PC-9 (cell line): ENCODE measurements at regions of chr19 and their contacts with region 1.

Region 1: GRCh38 chr19:12736995-12737834 is at the start of gene GET3:
- DNase-seq: peak; percentile 94 to 100
- H3K4me3 ChIP-seq: peak within 1 kb of the TSS; percentile 64
- H3K27ac ChIP-seq: peak within 1 kb of the TSS; percentile 75
- H3K4me1 ChIP-seq: peaks cover 30% of the 10 kb centered on the region
- H3K27me3 ChIP-seq: no peaks in the 10 kb centered on the region
- CTCF ChIP-seq: no peak
- total RNA-seq, gene GET3: 72.8 and 81.9 TPM in 2 replicates

Region 2: GRCh38 chr19:11558881-11559828 is 1178.1 kb before region 1 on chr19 and contains the start of gene ELOF1:
- CTCF ChIA-PET with region 1: interaction called, 13 read pairs
- POLR2A ChIA-PET with region 1: no interaction called
- intact Hi-C with region 1: no loop called
- DNase-seq: peak; percentile 97
- H3K4me3 ChIP-seq: peak within 1 kb of the TSS; percentile 97
- H3K27ac ChIP-seq: peak within 1 kb of the TSS; percentile 47; the same call in 1 of the 2 replicates
- H3K4me1 ChIP-seq: peaks cover 11% of the 10 kb centered on the region; the same call in 1 of the 2 replicates
- H3K27me3 ChIP-seq: no peaks in the 10 kb centered on the region
- CTCF ChIP-seq: peak; percentile 48
- total RNA-seq, gene ELOF1: 65.5 and 68.7 TPM in 2 replicates

Region 3: GRCh38 chr19:12647490-12648071 is 89.6 kb before region 1 on chr19:
- CTCF ChIA-PET with region 1: no interaction called
- POLR2A ChIA-PET with region 1: no interaction called
- intact Hi-C with region 1: no loop called
- DNase-seq: peak in 1 of 2 experiments; percentile 13
- H3K4me3 ChIP-seq: no peak overlapping the region
- H3K27ac ChIP-seq: no peak overlapping the region
- H3K4me1 ChIP-seq: no peaks in the 10 kb centered on the region
- H3K27me3 ChIP-seq: no peaks in the 10 kb centered on the region
- CTCF ChIP-seq: no peak

Region 4: DNA sequence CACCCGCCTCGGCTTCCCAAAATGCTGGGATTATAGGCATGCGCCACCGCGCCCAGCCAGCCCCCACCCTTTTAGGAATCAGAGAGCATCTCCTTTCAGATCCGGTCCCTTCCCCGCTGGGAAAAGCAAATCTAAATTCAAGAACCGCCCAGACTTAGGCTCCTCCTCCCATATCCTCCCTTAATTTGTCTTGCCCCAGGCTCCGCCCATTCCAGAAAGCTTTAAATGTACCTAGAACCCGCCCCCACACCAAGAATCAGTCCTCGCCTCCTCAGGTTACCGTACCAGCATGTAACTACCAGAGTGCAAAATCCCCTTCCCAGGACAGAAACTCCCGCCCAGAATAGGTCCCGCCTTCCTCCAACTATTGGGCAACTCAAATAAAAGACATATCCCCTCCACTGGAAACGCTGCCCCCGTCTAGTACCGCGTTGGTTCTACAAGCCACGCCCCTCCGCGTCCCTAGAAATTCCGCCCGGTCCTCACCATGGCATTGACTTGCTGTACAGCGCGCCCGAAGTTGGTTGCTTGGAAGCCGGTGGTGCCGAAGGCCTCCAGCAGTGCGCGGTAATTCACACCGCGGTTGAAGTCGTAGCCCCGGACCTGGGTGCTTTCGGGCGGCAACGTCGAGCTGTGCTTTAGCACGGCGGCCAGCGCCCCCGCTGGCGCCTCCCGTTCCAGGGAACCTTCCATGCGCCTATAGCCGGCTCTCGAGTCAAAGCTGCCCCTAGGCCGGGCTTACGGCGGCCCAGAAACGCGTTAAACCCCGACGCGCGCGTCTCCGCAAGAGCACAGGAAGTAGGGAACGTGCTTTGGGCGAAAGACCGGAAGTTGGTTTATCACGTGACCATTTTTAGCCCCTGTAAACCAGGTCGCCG is 55.9 kb before region 1 on chr19 and contains the start of gene DHPS:
- CTCF ChIA-PET with region 1: no interaction called
- POLR2A ChIA-PET with region 1: interaction called, 3 read pairs
- intact Hi-C with region 1: loop called (anchors 1 kb)
- DNase-seq: peak; percentile 93 to 98
- H3K4me3 ChIP-seq: peak within 1 kb of the TSS; percentile 76
- H3K27ac ChIP-seq: peak within 1 kb of the TSS; percentile 98
- H3K4me1 ChIP-seq: peaks cover 11% of the 10 kb centered on the region; the same call in 1 of the 2 replicates
- H3K27me3 ChIP-seq: no peaks in the 10 kb centered on the region
- CTCF ChIP-seq: peak; percentile 30; the same call in 1 of the 2 replicates
- total RNA-seq, gene DHPS: 106 and 121 TPM in 2 replicates

Region 5: GRCh38 chr19:12696366-12697335 is 40.6 kb before region 1 on chr19 and contains the start of gene FBXW9:
- CTCF ChIA-PET with region 1: no interaction called
- POLR2A ChIA-PET with region 1: interaction called, 12 read pairs
- intact Hi-C with region 1: no loop called
- DNase-seq: peak; percentile 90 to 91
- H3K4me3 ChIP-seq: peak within 1 kb of the TSS; percentile 72
- H3K27ac ChIP-seq: peak within 1 kb of the TSS; percentile 48
- H3K4me1 ChIP-seq: peaks cover 8% of the 10 kb centered on the region; the same call in 1 of the 2 replicates
- H3K27me3 ChIP-seq: no peaks in the 10 kb centered on the region
- CTCF ChIP-seq: no peak
- total RNA-seq, gene FBXW9: 21.0 and 21.9 TPM in 2 replicates

Region 6: GRCh38 chr19:12722566-12723380 is 14.4 kb before region 1 on chr19:
- CTCF ChIA-PET with region 1: interaction called, 3 read pairs
- POLR2A ChIA-PET with region 1: interaction called, 3 read pairs
- intact Hi-C with region 1: loop called (anchors 1 kb)
- DNase-seq: peak; percentile 92 to 98
- H3K4me3 ChIP-seq: peak overlapping the region; percentile 76
- H3K27ac ChIP-seq: peak overlapping the region; percentile 55
- H3K4me1 ChIP-seq: peaks cover 14% of the 10 kb centered on the region; the same call in 1 of the 2 replicates
- H3K27me3 ChIP-seq: no peaks in the 10 kb centered on the region
- CTCF ChIP-seq: 0 out of 2 replicates have a peak, but pooled peaks have one; percentile 17

Region 7: DNA sequence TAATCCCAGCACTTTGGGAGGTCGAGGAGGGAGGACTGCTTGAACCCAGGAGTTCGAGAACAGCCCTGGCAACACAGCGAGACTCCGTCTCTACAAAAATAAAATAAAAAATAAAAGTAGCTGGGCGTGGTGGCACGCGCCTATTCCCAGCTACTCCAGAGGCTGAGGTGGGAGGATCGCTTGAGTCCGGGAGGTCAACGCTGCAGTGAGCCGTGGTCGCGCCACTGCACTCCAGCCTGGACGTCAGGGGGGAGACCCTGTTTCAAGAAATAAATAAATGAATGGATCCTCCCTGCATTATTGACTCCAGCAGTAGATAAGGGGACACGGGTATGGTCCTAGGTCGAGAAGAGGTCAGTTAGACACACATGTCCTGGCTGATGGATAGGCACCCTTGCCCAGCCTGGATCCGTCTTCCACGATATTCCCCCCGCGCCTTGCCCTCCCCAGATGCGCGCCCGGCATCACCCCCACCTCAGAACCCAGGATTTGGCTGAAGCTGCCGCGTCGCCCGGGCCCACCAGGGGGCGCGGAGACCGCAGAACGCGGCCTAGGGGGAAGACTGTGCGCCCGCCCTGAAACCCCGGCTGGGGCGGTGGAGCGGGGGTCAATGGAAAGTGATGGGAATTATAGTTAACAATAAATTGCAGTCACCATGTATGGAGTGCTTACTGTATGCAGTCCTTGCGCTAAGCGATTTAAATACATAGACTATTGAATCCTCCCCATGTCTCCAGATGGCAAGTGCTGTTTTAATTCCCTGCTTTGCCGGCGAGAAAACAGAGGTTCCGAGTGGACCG is 40.2 kb after region 1 on chr19:
- CTCF ChIA-PET with region 1: no interaction called
- POLR2A ChIA-PET with region 1: no interaction called
- intact Hi-C with region 1: loop called (anchors 1 kb)
- DNase-seq: peak; percentile 63 to 85
- H3K4me3 ChIP-seq: peak overlapping the region; percentile 59
- H3K27ac ChIP-seq: peak overlapping the region; percentile 51
- H3K4me1 ChIP-seq: peaks cover 54% of the 10 kb centered on the region
- H3K27me3 ChIP-seq: no peaks in the 10 kb centered on the region
- CTCF ChIP-seq: peak; percentile 99

Region 8: DNA sequence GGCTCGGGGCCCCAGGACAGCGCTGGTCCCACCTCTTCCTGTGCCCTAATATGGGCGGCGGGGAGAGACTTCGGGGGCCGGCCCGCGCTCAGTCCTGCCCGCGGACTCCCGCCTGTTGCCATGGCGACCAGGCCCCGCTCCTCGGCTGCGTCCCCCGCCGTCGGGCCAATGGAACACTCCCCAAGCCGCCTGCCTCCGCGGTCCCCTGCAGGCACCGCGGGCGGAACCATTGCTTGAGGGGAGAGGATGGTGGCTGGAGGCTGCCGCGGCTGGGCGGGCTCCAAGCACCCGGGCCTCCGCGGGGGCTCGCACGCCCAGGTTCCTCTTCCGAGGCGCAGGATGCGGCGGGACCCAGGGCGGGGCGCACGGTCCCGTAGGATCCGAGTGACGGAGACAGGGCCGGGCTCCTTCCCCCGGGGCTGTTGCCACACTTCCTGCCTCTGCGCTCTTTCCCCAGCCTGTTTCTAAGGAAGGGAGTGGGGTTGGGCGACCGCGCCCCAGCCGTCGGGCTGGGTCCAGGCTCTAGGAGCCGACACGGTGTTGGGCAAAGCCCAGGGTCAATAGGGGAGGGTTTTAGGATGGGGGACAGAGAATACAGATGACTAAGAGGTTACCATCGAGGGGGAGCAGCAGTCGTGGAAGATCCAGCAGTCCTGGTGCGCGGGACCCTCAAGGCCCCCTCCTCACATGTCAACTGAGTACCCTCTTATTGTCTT is 52.8 kb after region 1 on chr19:
- CTCF ChIA-PET with region 1: no interaction called
- POLR2A ChIA-PET with region 1: interaction called, 11 read pairs
- intact Hi-C with region 1: no loop called
- DNase-seq: peak; percentile 92 to 98
- H3K4me3 ChIP-seq: peak overlapping the region; percentile 73; the same call in 1 of the 2 replicates
- H3K27ac ChIP-seq: peak overlapping the region; percentile 86
- H3K4me1 ChIP-seq: peaks cover 61% of the 10 kb centered on the region
- H3K27me3 ChIP-seq: no peaks in the 10 kb centered on the region
- CTCF ChIP-seq: no peak